ENCODE measurements at regions of chr4 and their contacts with region 1.

Region 1: GRCh38 chr4:38948551-38948950 is 80.9 kb downstream of the FAM114A1 start:
- DNase-seq: peak; percentile 49 to 75
- ATAC-seq: peak; percentile 68 to 94 (median 84)
- H3K4me3 ChIP-seq: no peak overlapping the region
- H3K27ac ChIP-seq: no peak overlapping the region
- H3K4me1 ChIP-seq: peaks cover 15% of the 10 kb centered on the region
- H3K27me3 ChIP-seq: no peaks in the 10 kb centered on the region
- CTCF ChIP-seq: no peak

Region 2: GRCh38 chr4:39181905-39182638 is 233.5 kb after region 1 on chr4 and contains the start of gene WDR19:
- intact Hi-C with region 1: loop called in 1 of 2 experiments (anchors 5 kb)
- DNase-seq: peak; percentile 99
- ATAC-seq: peak; percentile 99 to 100 (median 100)
- H3K4me3 ChIP-seq: peak within 1 kb of the TSS; percentile 88
- H3K27ac ChIP-seq: peak within 1 kb of the TSS; percentile 87
- H3K4me1 ChIP-seq: peaks cover 14% of the 10 kb centered on the region
- H3K27me3 ChIP-seq: no peaks in the 10 kb centered on the region
- CTCF ChIP-seq: peak; percentile 48
- total RNA-seq, gene WDR19: 3.9 to 6.6 (median 4.6) TPM